ENCODE measurements at regions of chr17 and their contacts with region 1.

Region 1: GRCh38 chr17:48618256-48618897 is 3.3 kb upstream of the HOXB8 start:
- DNase-seq: peak; percentile 77
- ATAC-seq: peak; percentile 84
- H3K4me3 Mint-ChIP-seq: no peak overlapping the region
- H3K27ac Mint-ChIP-seq: peak overlapping the region; percentile 9
- H3K4me1 Mint-ChIP-seq: peaks cover 26% of the 10 kb centered on the region
- H3K27me3 Mint-ChIP-seq: peaks cover 78% of the 10 kb centered on the region
- CTCF ChIP-seq: peak; percentile 66

Region 2: GRCh38 chr17:47840740-47841603 is 777.4 kb before region 1 on chr17 and contains the start of gene SCRN2:
- CTCF ChIA-PET with region 1: no interaction called
- POLR2A ChIA-PET with region 1: no interaction called
- intact Hi-C with region 1: loop called (anchors 10 kb)
- DNase-seq: peak; percentile 91
- ATAC-seq: peak; percentile 94
- H3K4me3 Mint-ChIP-seq: peak within 1 kb of the TSS; percentile 98
- H3K27ac Mint-ChIP-seq: peak within 1 kb of the TSS; percentile 79
- H3K4me1 Mint-ChIP-seq: peaks cover 23% of the 10 kb centered on the region
- H3K27me3 Mint-ChIP-seq: peaks cover 16% of the 10 kb centered on the region
- CTCF ChIP-seq: peak; percentile 61
- total RNA-seq, gene SCRN2: 32.1 and 36.3 TPM in 2 replicates

Region 3: DNA sequence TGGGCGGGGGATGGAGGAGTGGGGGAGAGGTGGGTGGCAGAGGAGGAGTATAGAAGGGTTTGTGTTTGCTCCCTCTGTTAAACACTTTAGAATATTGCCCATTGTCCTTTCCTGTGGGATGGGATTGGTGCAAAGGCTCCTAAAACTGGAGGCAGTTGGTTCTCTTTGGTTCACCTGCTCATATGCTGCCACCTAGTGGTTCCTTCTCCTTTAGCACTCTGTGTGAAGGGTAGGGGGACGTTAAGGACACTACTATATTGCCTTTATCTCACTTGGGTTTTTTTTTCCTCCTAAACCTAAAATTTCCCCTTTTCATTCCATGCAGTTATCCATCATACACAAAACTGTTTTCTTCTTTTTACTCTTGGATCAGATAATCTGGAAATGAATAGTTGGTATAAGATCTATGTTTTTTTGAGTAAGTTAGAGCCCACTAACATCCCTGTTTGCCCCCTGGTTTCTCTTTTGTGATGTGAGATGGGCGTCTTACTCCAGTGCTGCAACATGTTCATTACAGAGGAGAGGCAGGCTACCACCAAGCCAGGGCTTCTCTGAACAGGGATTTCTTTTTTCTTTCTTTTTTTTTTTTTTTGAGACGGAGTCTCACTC is 487.1 kb before region 1 on chr17:
- CTCF ChIA-PET with region 1: interaction called, 6 read pairs
- POLR2A ChIA-PET with region 1: no interaction called
- intact Hi-C with region 1: loop called (anchors 1 kb)
- DNase-seq: no peak
- ATAC-seq: peak; percentile 83
- H3K4me3 Mint-ChIP-seq: no peak overlapping the region
- H3K27ac Mint-ChIP-seq: no peak overlapping the region
- H3K4me1 Mint-ChIP-seq: peaks cover 4% of the 10 kb centered on the region
- H3K27me3 Mint-ChIP-seq: no peaks in the 10 kb centered on the region
- CTCF ChIP-seq: no peak

Region 4: DNA sequence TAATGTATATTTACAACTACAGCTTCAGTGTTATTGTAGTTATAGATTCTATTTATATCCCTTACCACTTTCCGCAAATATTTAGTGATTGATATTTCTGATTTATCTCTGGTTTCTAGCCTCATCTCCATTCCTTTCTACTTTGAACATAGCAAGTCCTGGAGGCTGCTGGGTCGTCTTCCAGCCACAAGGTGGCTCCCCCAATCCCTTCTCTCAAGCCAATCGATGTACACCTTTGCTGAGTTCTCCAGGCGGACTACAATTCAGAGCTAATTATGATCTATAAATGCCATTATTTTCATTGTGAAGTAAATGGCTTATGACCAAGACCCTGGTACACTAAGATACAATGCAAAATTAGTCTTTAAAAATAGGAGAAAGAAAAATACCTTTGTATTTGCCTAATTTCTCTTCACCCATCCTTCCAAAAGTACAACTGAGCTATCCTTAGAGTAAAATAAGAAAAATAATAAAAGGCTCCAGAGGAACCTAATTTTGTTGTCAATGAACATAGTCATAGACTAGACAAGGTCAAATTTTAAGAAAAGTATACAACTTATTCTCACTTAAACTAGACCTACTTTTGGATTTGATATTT is 310.5 kb before region 1 on chr17:
- CTCF ChIA-PET with region 1: interaction called, 16 read pairs
- POLR2A ChIA-PET with region 1: interaction called, 3 read pairs
- intact Hi-C with region 1: loop called (anchors 1 kb)
- DNase-seq: peak; percentile 20
- ATAC-seq: peak; percentile 86
- H3K4me3 Mint-ChIP-seq: no peak overlapping the region
- H3K27ac Mint-ChIP-seq: no peak overlapping the region
- H3K4me1 Mint-ChIP-seq: peaks cover 6% of the 10 kb centered on the region
- H3K27me3 Mint-ChIP-seq: no peaks in the 10 kb centered on the region
- CTCF ChIP-seq: peak; percentile 70

Region 5: GRCh38 chr17:48561884-48562810 is 56.2 kb before region 1 on chr17:
- CTCF ChIA-PET with region 1: no interaction called
- POLR2A ChIA-PET with region 1: no interaction called
- intact Hi-C with region 1: no loop called
- DNase-seq: no peak
- ATAC-seq: no peak
- H3K4me3 Mint-ChIP-seq: no peak overlapping the region
- H3K27ac Mint-ChIP-seq: no peak overlapping the region
- H3K4me1 Mint-ChIP-seq: no peaks in the 10 kb centered on the region
- H3K27me3 Mint-ChIP-seq: peaks cover 18% of the 10 kb centered on the region
- CTCF ChIP-seq: no peak

Region 6: DNA sequence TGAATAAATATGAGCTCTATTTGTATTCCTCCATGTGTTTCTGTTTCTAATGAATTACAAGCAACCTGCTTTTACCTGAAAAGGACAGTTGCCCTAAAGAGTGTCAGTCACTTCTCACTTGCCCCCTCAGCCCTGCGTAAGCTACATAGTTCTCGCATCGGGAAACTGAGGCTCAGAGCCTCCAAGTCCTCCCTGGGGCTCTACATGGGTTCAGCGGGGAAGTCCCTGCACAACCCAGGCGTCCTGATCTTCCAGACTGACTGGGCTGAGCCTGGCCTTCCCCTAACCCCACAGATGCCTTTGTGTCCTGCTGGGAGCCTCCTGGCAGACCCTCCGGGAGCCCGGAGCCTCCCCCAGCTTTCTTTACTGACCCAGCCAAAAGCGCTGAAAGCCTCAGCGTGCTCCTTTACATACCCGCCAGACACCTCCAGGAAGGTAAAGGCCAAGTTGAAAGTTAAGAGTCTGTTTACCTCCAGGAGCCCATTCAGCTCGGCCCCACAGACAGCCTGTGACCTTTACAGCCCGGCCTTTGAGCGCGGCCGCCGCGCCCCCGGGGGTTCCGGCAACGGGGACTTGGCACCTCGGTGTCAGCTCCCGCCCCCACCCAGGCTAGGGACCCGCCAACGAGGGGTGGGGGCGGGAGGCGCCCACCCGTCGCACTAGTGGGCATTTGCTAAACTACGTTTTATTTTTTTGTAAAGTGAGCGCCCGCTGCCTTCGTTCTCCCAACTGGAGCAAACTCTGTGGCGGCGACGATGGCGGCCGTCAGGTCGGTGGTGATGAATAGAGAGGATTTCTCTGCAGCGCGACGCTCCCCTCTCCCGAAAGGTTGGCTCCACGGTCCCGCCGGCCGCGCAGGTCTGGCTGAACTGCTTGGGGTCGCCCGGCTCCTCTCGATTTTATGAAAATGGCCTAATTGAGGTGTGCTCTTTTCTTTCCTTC is 114.6 kb after region 1 on chr17:
- CTCF ChIA-PET with region 1: no interaction called
- POLR2A ChIA-PET with region 1: no interaction called
- intact Hi-C with region 1: no loop called
- DNase-seq: no peak
- ATAC-seq: no peak
- H3K4me3 Mint-ChIP-seq: peak overlapping the region; percentile 30
- H3K27ac Mint-ChIP-seq: no peak overlapping the region
- H3K4me1 Mint-ChIP-seq: peaks cover 23% of the 10 kb centered on the region
- H3K27me3 Mint-ChIP-seq: peaks cover 75% of the 10 kb centered on the region
- CTCF ChIP-seq: no peak

Region 7: GRCh38 chr17:48997083-48997826 is 378.9 kb after region 1 on chr17 and contains the start of gene IGF2BP1:
- CTCF ChIA-PET with region 1: no interaction called
- POLR2A ChIA-PET with region 1: no interaction called
- intact Hi-C with region 1: loop called (anchors 10 kb)
- DNase-seq: peak; percentile 40
- ATAC-seq: peak; percentile 64
- H3K4me3 Mint-ChIP-seq: peak within 1 kb of the TSS; percentile 78
- H3K27ac Mint-ChIP-seq: peak within 1 kb of the TSS; percentile 61
- H3K4me1 Mint-ChIP-seq: peaks cover 33% of the 10 kb centered on the region
- H3K27me3 Mint-ChIP-seq: peaks cover 60% of the 10 kb centered on the region
- CTCF ChIP-seq: no peak
- total RNA-seq, gene IGF2BP1: 0.10 and 0.40 TPM in 2 replicates

Measured in activated B cell treated with CpG ODN at 0.5 μM for 24 hours (primary cell).